ENCODE measurements at regions of chrX and their contacts with region 1.

Region 1: GRCh38 chrX:136953867-136954787 is 73.6 kb upstream of the RBMX start:
- DNase-seq: no peak

Region 2: GRCh38 chrX:136920001-136920400 is 34.1 kb before region 1 on chrX:
- intact Hi-C with region 1: no loop called
- DNase-seq: no peak

Region 3: GRCh38 chrX:137051978-137052642 is 98.0 kb after region 1 on chrX:
- intact Hi-C with region 1: loop called (anchors 5 kb)
- DNase-seq: peak; percentile 77

Region 4: DNA sequence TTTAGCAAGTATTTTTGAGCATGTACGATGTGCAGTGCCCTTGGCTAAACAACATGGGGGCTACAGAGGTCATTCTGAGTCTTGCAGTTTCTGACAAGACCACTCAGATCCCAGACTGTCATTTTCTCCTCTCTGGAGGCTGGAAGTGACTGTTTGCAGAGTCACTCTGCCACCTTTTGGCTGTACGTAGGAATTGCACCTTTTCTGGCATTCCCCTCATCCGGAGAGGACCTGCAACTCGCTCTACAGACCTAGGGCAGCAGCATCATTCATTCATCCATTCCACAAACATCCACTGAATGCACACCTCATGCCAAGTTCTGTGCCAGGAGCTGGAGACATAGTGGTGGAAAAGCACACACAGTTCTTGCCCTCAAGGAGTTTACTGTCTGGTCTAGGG is 240.0 kb after region 1 on chrX:
- intact Hi-C with region 1: loop called (anchors 10 kb)
- DNase-seq: no peak